AG04450 (cell line): ENCODE measurements at regions of chr7 and their contacts with region 1.

Region 1: GRCh38 chr7:129553861-129554530 is 51.7 kb downstream of the SMKR1 start:
- DNase-seq: no peak
- H3K4me3 ChIP-seq: peak overlapping the region; percentile 31
- H3K27ac ChIP-seq: no peak overlapping the region
- H3K27me3 ChIP-seq: peaks cover 16% of the 10 kb centered on the region
- CTCF ChIP-seq: no peak

Region 2: GRCh38 chr7:129535896-129536295 is 18.1 kb before region 1 on chr7:
- CTCF ChIA-PET with region 1: no interaction called
- POLR2A ChIA-PET with region 1: interaction called, 16 read pairs
- DNase-seq: no peak
- H3K4me3 ChIP-seq: no peak overlapping the region
- H3K27ac ChIP-seq: no peak overlapping the region
- H3K27me3 ChIP-seq: no peaks in the 10 kb centered on the region
- CTCF ChIP-seq: no peak

Region 3: DNA sequence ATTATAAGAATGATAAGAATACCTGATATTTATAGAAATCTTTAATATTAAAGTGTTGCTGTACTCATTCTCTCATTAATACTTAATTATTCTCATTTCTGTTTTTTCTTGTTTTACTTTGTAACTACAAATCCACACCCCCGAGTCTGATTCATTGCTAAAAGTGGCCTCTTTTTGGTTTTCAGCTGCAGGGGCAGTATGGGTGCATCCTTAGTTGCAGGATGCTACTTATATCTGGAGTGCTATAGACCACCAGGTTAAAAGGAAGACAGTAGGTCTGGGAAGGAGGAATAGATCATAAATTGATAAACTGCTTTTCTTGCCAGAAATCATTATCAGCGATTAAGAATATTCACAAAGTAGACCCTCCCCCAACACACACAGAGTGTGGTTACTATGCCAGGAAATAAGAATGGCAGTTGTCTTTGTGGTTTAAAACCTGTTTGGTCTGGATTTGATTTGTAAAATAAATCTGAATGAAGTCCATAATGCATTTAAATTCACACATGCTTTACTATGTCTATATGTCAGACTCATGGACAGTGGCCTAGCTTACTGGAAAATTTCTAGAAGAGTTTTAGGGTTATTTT is 154.0 kb after region 1 on chr7:
- CTCF ChIA-PET with region 1: no interaction called
- POLR2A ChIA-PET with region 1: no interaction called
- DNase-seq: no peak
- H3K4me3 ChIP-seq: no peak overlapping the region
- H3K27ac ChIP-seq: no peak overlapping the region
- H3K27me3 ChIP-seq: no peaks in the 10 kb centered on the region
- CTCF ChIP-seq: no peak